ENCODE measurements at regions of chr6 and their contacts with region 1.

Region 1: DNA sequence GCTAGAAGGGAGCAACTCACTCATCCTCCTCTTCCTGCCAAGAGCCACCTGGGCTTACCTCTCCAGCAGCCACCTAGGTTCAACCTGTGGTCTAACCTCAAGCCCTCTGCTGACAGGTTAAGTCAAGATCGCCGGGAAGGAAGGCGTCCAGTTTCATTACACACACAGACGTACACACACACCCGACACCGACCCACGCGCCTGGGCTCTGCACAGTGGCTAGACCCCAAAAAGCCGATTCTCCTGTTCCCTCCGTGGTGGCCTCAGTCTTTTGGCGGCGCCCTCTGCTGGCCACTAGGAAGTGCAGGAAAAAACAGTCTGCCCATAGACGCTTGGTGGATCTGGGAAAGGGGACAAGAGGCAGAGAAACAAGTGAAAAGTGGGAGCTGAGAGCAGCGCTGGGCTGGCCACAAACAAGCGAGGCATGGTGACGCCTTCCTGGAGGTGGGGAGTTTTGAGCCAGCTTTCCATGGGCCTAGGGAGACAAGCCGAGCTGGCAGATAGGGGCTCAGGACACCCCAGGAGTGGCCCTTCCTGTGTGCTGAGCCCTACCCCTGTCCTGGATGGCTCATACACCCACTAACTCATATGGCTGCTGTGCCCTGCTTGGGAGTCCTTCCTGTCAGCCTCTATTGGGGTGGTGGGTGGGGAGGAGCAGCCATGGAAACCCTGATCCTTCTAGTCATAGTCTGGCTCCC is 52.7 kb downstream of the MRPL14 start:
- DNase-seq: peak in 5 of 6 donors; percentile 48 to 82 (median 68)
- ATAC-seq: peak; percentile 62 to 78 (median 69)
- H3K4me3 ChIP-seq: peak overlapping the region in 1 of 4 donors; percentile 49
- H3K27ac ChIP-seq: peak overlapping the region in 2 of 4 donors; percentile 15 to 81
- H3K4me1 ChIP-seq: peaks cover 8 to 22% (median 11%) of the 10 kb centered on the region in 3 donors
- H3K27me3 ChIP-seq: no peaks in the 10 kb centered on the region
- CTCF ChIP-seq: peak; percentile 74 to 87 (median 77)

Region 2: GRCh38 chr6:43667245-43668150 is 407.1 kb before region 1 on chr6:
- intact Hi-C with region 1: loop called in 1 of 3 experiments (anchors 5 kb)
- DNase-seq: peak; percentile 79 to 96 (median 90)
- ATAC-seq: peak; percentile 81 to 92 (median 88)
- H3K4me3 ChIP-seq: peak overlapping the region in 1 of 4 donors; percentile 23
- H3K27ac ChIP-seq: peak overlapping the region in 1 of 4 donors; percentile 63
- H3K4me1 ChIP-seq: peaks cover 14 to 21% (median 21%) of the 10 kb centered on the region in 3 donors
- H3K27me3 ChIP-seq: no peaks in the 10 kb centered on the region
- CTCF ChIP-seq: peak; percentile 92 to 96 (median 92)

Region 3: DNA sequence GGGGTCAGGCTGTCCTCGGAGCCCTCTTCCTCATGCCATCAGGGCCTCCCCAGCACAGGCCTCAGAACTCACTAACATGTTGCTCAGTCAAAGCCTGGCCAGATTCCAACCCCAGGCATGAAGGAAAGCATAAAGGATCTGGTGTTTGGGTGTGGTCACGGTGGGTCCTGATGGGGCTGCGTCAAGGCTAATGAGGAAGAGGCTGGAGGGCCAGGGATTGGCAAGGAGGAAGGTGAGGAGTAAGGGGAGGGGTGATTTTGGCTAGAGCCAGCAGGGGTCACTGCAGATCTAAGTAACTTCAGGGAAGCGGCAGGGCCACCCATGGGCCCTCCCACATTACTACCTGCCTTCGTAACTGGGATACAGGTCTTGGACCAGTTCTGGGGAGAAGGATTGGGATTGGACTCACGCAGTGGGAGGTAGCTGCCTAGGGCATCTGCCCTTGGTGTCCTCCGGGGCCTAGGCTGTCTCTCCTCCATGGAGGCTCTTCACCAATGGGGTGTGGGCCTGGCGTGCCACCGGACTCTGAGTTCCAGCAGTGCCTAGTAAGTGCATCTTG is 350.8 kb before region 1 on chr6:
- intact Hi-C with region 1: loop called in 1 of 3 experiments (anchors 5 kb)
- DNase-seq: peak; percentile 71 to 86 (median 78)
- ATAC-seq: peak; percentile 92 to 96 (median 94)
- H3K4me3 ChIP-seq: no peak overlapping the region
- H3K27ac ChIP-seq: no peak overlapping the region
- H3K4me1 ChIP-seq: no peaks in the 10 kb centered on the region
- H3K27me3 ChIP-seq: no peaks in the 10 kb centered on the region
- CTCF ChIP-seq: peak; percentile 41 to 55 (median 46)

Region 4: DNA sequence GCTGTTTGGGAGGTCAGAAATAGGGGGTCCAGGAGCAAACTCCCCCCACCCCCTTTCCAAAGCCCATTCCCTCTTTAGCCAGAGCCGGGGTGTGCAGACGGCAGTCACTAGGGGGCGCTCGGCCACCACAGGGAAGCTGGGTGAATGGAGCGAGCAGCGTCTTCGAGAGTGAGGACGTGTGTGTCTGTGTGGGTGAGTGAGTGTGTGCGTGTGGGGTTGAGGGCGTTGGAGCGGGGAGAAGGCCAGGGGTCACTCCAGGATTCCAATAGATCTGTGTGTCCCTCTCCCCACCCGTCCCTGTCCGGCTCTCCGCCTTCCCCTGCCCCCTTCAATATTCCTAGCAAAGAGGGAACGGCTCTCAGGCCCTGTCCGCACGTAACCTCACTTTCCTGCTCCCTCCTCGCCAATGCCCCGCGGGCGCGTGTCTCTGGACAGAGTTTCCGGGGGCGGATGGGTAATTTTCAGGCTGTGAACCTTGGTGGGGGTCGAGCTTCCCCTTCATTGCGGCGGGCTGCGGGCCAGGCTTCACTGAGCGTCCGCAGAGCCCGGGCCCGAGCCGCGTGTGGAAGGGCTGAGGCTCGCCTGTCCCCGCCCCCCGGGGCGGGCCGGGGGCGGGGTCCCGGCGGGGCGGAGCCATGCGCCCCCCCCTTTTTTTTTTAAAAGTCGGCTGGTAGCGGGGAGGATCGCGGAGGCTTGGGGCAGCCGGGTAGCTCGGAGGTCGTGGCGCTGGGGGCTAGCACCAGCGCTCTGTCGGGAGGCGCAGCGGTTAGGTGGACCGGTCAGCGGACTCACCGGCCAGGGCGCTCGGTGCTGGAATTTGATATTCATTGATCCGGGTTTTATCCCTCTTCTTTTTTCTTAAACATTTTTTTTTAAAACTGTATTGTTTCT is 304.8 kb before region 1 on chr6 and contains the start of gene VEGFA:
- intact Hi-C with region 1: loop called in 1 of 3 experiments (anchors 5 kb)
- DNase-seq: peak; percentile 81 to 99 (median 92)
- ATAC-seq: peak; percentile 59 to 76 (median 68)
- H3K4me3 ChIP-seq: peak within 1 kb of the TSS; percentile 76 to 96 (median 87)
- H3K27ac ChIP-seq: peak within 1 kb of the TSS; percentile 92 to 100 (median 96)
- H3K4me1 ChIP-seq: peaks cover 8 to 11% (median 8%) of the 10 kb centered on the region in 3 donors
- H3K27me3 ChIP-seq: no peaks in the 10 kb centered on the region
- CTCF ChIP-seq: peak; percentile 87 to 94 (median 92)
- total RNA-seq, gene VEGFA: 55.2 to 127 (median 90.0) TPM

Region 5: GRCh38 chr6:43856005-43856765 is 218.4 kb before region 1 on chr6:
- intact Hi-C with region 1: loop called in 2 of 3 experiments (anchors 10 kb)
- DNase-seq: peak; percentile 51 to 79 (median 72)
- ATAC-seq: peak; percentile 82 to 93 (median 88)
- H3K4me3 ChIP-seq: no peak overlapping the region
- H3K27ac ChIP-seq: no peak overlapping the region
- H3K4me1 ChIP-seq: no peaks in the 10 kb centered on the region
- H3K27me3 ChIP-seq: no peaks in the 10 kb centered on the region
- CTCF ChIP-seq: peak; percentile 25 to 56 (median 38)

Region 6: GRCh38 chr6:43964659-43965570 is 109.7 kb before region 1 on chr6:
- intact Hi-C with region 1: loop called in 1 of 3 experiments (anchors 10 kb)
- DNase-seq: no peak
- ATAC-seq: no peak
- H3K4me3 ChIP-seq: no peak overlapping the region
- H3K27ac ChIP-seq: no peak overlapping the region
- H3K4me1 ChIP-seq: no peaks in the 10 kb centered on the region
- H3K27me3 ChIP-seq: no peaks in the 10 kb centered on the region
- CTCF ChIP-seq: no peak

Region 7: DNA sequence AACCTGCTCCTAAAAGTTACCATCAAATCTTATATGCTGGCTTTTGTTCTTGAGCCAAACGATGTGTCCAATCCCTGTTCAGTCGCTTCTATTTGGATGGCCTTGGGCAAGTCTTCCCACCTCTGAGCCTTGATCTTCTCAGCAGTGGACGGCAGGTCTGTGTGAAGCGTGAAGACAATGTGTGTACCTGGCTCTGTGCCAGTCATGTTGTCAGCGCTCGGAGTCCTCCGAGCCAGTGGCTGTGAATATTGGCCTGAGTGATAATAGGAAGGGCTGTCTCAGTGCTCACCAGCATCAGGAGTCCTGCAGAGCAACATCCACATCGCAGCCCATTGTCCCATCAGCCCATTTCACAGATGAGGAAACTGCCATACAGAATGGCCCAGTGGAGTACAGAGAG is 531.9 kb after region 1 on chr6:
- intact Hi-C with region 1: no loop called
- DNase-seq: no peak
- ATAC-seq: no peak
- H3K4me3 ChIP-seq: no peak overlapping the region
- H3K27ac ChIP-seq: no peak overlapping the region
- H3K4me1 ChIP-seq: no peaks in the 10 kb centered on the region
- H3K27me3 ChIP-seq: no peaks in the 10 kb centered on the region
- CTCF ChIP-seq: no peak